GM12878 (cell line): ENCODE measurements at regions of chr9 and their contacts with region 1.

Region 1: DNA sequence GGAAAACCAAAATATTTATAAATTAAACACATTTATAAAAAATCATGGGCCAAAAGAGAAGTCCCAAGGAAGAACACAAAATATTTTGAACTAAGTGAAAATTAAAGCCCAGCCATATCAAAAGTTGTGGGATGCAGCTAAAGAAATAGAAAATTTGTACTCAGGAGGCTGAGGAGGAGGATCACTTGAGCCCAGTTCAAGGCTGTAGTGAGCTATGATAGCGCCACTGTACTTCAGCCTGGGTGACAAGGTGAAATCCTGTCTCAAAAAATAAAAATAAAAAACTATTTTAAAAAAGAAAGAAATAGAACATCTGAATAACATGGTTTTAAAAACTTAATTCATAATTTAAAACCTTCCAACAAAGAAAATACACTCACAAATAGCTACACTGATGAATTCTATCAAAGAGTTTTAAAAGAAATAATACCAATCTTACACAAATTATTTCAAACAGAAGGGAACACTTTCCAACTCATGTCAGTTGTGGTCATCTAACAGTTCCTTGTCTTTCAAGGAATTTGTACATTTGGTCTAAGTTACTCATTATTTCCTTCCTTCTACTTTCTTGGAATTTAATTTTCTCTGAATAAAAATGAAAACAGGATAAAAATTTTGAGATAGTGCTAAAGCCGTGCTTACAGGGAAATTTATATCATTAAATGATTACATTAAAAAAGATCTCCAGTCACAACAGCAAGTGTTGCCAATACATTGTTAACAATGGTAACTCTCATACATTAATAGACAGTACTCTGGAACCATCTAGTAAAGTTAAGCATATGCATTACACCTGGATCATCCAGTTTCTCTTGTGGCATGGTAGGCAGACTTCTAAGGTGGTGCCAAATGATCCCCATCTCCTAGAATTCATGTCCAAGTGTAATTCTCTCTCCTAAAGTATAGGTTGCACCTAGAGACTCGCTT is 17.8 kb downstream of the PTBP3 start:
- DNase-seq: no peak
- ATAC-seq: no peak
- H3K4me3 ChIP-seq: no peak overlapping the region
- H3K27ac ChIP-seq: no peak overlapping the region
- H3K4me1 ChIP-seq: peaks cover 4% of the 10 kb centered on the region; the same call in 1 of the 2 replicates
- H3K27me3 ChIP-seq: no peaks in the 10 kb centered on the region
- CTCF ChIP-seq: no peak
- EP300 ChIP-seq: no peak
- POLR2A ChIP-seq: no peak
- RAD21 ChIP-seq: no peak

Region 2: GRCh38 chr9:112074250-112075008 is 241.2 kb before region 1 on chr9:
- CTCF ChIA-PET with region 1: no interaction called
- POLR2A ChIA-PET with region 1: no interaction called
- RAD21 ChIA-PET with region 1: no interaction called
- SMC1A ChIA-PET with region 1: no interaction called
- in situ Hi-C with region 1: no loop called
- intact Hi-C with region 1: no loop called
- DNase-seq: peak; percentile 84
- ATAC-seq: peak; percentile 72
- H3K4me3 ChIP-seq: peak overlapping the region; percentile 4; the same call in 1 of the 2 replicates
- H3K27ac ChIP-seq: peak overlapping the region; percentile 73
- H3K4me1 ChIP-seq: peaks cover 66% of the 10 kb centered on the region
- H3K27me3 ChIP-seq: no peaks in the 10 kb centered on the region
- CTCF ChIP-seq: peak; percentile 91 to 97 (median 97)
- EP300 ChIP-seq: no peak
- POLR2A ChIP-seq: no peak
- RAD21 ChIP-seq: peak; percentile 99

Region 3: DNA sequence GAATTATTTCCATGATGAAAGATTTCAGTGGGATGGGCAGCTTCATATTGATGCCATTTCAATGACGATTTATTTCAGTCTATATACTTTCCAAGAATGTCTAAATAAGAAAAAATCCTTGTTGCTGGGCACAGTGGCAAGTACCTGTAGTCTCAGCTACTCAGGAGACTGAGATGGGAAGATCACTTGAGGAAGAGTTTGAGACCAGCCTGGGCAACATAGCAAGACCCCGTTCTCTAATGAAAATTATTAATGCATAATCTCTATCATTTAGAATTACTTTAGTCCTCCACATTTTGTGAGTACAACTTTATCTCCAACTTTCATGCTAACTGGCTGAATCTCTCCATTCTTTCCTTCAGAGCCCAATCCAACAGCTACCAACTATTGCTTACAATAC is 34.7 kb before region 1 on chr9:
- CTCF ChIA-PET with region 1: no interaction called
- POLR2A ChIA-PET with region 1: no interaction called
- RAD21 ChIA-PET with region 1: no interaction called
- SMC1A ChIA-PET with region 1: no interaction called
- in situ Hi-C with region 1: no loop called
- intact Hi-C with region 1: no loop called
- DNase-seq: no peak
- ATAC-seq: no peak
- H3K4me3 ChIP-seq: no peak overlapping the region
- H3K27ac ChIP-seq: no peak overlapping the region
- H3K4me1 ChIP-seq: no peaks in the 10 kb centered on the region
- H3K27me3 ChIP-seq: no peaks in the 10 kb centered on the region
- CTCF ChIP-seq: no peak
- EP300 ChIP-seq: no peak
- POLR2A ChIP-seq: no peak
- RAD21 ChIP-seq: no peak

Region 4: GRCh38 chr9:112327718-112328464 is 12.3 kb after region 1 on chr9:
- CTCF ChIA-PET with region 1: interaction called, 6 read pairs
- POLR2A ChIA-PET with region 1: no interaction called
- RAD21 ChIA-PET with region 1: interaction called, 6 read pairs
- SMC1A ChIA-PET with region 1: interaction called, 22 read pairs
- in situ Hi-C with region 1: no loop called
- intact Hi-C with region 1: no loop called
- DNase-seq: no peak
- ATAC-seq: no peak
- H3K4me3 ChIP-seq: 0 out of 2 replicates have a peak overlapping the region, but pooled peaks have one; percentile 5
- H3K27ac ChIP-seq: 0 out of 2 replicates have a peak overlapping the region, but pooled peaks have one; percentile 20
- H3K4me1 ChIP-seq: peaks cover 23% of the 10 kb centered on the region
- H3K27me3 ChIP-seq: no peaks in the 10 kb centered on the region
- CTCF ChIP-seq: no peak
- EP300 ChIP-seq: no peak
- POLR2A ChIP-seq: no peak
- RAD21 ChIP-seq: no peak